ENCODE measurements at regions of chr2 and their contacts with region 1.

Region 1: GRCh38 chr2:152542995-152543481 is 174.2 kb downstream of the PRPF40A start:
- DNase-seq: no peak
- ATAC-seq: peak; percentile 81

Region 2: DNA sequence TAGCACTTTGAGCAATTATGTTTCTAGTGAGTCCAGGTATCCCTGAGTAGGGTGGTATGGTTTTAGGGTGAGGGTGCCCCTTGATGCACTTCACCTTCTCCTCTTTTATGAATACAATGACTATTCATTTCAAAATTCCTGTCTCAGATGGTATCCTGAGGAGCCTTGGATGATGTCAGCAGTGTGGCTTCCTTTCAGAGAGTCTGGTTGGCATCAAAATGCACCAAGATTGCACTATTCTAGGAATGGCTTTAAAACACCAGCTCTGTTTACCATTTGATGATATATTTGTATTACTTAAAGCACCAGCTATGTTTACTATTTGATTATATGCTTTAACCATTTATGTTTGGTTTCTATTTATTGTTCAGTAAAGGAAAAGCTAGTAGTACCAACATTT is 67.1 kb before region 1 on chr2:
- intact Hi-C with region 1: loop called (anchors 2 kb)
- DNase-seq: no peak
- ATAC-seq: no peak